ENCODE measurements at regions of chrX and their contacts with region 1.

Region 1: GRCh38 chrX:135086197-135086854 is 34.0 kb downstream of the ETDB start:
- DNase-seq: peak in 2 of 4 donors; percentile 28 to 48
- ATAC-seq: peak; percentile 96
- H3K4me3 ChIP-seq: no peak overlapping the region
- H3K27ac ChIP-seq: no peak overlapping the region
- H3K4me1 ChIP-seq: no peaks in the 10 kb centered on the region
- H3K27me3 ChIP-seq: no peaks in the 10 kb centered on the region
- CTCF ChIP-seq: peak; percentile 51 to 52

Region 2: DNA sequence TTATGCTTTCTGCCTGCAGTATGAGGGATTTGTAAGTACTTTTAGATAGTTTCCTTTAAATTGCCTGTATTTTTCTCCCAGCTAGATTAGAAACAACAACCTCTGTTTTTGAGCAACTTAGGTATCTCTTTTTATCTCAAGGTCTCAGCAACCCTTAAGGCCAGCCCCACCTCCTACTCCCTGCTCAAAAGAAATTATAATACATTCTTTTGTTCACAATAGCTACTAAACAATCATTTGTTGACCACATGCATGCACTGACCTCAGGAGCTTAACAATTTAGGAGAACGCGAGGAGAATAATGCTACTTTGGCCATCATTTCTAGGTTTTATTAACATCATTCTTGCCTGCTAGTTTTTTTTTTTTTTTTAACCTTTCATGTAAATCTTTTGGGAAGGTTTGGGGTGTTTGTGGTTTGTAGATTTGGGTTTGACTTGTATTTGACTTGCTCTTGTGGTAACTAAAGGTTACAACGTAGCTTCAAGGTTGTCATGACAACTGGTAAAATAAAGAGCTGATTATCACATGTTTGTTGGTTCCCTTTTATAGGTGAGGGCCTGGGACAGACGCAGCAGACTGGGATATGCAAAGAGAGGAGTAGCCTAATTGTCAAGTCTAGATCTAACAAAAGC is 282.7 kb before region 1 on chrX:
- intact Hi-C with region 1: no loop called
- DNase-seq: no peak
- ATAC-seq: no peak
- H3K4me3 ChIP-seq: no peak overlapping the region
- H3K27ac ChIP-seq: no peak overlapping the region
- H3K4me1 ChIP-seq: no peaks in the 10 kb centered on the region
- H3K27me3 ChIP-seq: no peaks in the 10 kb centered on the region
- CTCF ChIP-seq: no peak

Region 3: GRCh38 chrX:134969726-134970125 is 116.6 kb before region 1 on chrX:
- intact Hi-C with region 1: loop called in 1 of 2 experiments (anchors 10 kb)
- DNase-seq: no peak
- ATAC-seq: no peak
- H3K4me3 ChIP-seq: no peak overlapping the region
- H3K27ac ChIP-seq: no peak overlapping the region
- H3K4me1 ChIP-seq: no peaks in the 10 kb centered on the region
- H3K27me3 ChIP-seq: no peaks in the 10 kb centered on the region
- CTCF ChIP-seq: no peak

Measured in left lung (tissue), 14 donors.